H1 (cell line): ENCODE measurements at regions of chr10 and their contacts with region 1.

Region 1: GRCh38 chr10:83801983-83802382 is 337.3 kb upstream of the GHITM start:
- DNase-seq: no peak
- H3K4me3 ChIP-seq: no peak overlapping the region
- H3K27ac ChIP-seq: no peak overlapping the region
- H3K4me1 ChIP-seq: no peaks in the 10 kb centered on the region
- H3K27me3 ChIP-seq: no peaks in the 10 kb centered on the region
- CTCF ChIP-seq: peak in 2 of 3 experiments; percentile 37 to 40; a peak in 3 of 4 replicates
- EP300 ChIP-seq: no peak
- POLR2A ChIP-seq: no peak
- RAD21 ChIP-seq: peak; percentile 76 to 78

Region 2: DNA sequence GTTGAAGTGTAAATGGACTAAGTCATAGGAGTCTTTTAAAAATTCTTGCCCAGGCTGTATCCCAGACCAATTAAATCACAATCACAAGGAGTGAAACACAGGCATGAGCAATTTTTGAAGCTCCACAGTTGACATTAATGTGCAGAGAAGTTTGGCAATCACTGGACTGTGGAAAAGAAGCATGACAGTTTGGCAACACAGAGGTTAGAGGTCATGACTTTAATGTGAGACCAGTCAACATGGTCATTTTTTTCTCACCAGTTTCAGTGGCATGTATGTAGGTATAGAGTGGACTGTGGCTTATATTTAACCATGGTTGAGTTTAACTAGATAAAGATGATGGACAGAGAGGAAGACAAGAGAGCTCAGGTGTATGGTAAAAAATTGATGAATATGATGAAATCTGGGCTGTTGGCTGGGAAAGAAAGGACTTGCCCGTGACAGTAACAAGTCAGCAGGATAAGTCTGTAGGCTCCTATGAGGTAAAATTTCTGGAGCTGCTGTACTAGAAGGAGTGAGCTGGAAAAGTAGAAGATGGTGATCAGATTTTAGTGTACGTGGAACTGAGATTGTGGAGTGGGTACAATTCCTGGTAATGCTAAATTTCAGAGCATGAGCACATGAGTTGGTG is 94.9 kb before region 1 on chr10:
- CTCF ChIA-PET with region 1: no interaction called
- POLR2A ChIA-PET with region 1: no interaction called
- DNase-seq: no peak
- H3K4me3 ChIP-seq: no peak overlapping the region
- H3K27ac ChIP-seq: no peak overlapping the region
- H3K4me1 ChIP-seq: no peaks in the 10 kb centered on the region
- H3K27me3 ChIP-seq: peaks cover 0 to 1% (median 0%) of the 10 kb centered on the region in 4 experiments; a peak in 1 of 7 replicates
- CTCF ChIP-seq: no peak
- EP300 ChIP-seq: no peak
- POLR2A ChIP-seq: no peak
- RAD21 ChIP-seq: no peak

Region 3: GRCh38 chr10:83816942-83817341 is 15.0 kb after region 1 on chr10:
- CTCF ChIA-PET with region 1: interaction called, 12 read pairs
- POLR2A ChIA-PET with region 1: no interaction called
- DNase-seq: no peak
- H3K4me3 ChIP-seq: no peak overlapping the region
- H3K27ac ChIP-seq: no peak overlapping the region
- H3K4me1 ChIP-seq: peaks cover 0 to 2% (median 0%) of the 10 kb centered on the region in 4 experiments; a peak in 1 of 7 replicates
- H3K27me3 ChIP-seq: no peaks in the 10 kb centered on the region
- CTCF ChIP-seq: no peak
- EP300 ChIP-seq: no peak
- POLR2A ChIP-seq: no peak
- RAD21 ChIP-seq: no peak